ENCODE measurements at regions of chr1 and their contacts with region 1.

Region 1: DNA sequence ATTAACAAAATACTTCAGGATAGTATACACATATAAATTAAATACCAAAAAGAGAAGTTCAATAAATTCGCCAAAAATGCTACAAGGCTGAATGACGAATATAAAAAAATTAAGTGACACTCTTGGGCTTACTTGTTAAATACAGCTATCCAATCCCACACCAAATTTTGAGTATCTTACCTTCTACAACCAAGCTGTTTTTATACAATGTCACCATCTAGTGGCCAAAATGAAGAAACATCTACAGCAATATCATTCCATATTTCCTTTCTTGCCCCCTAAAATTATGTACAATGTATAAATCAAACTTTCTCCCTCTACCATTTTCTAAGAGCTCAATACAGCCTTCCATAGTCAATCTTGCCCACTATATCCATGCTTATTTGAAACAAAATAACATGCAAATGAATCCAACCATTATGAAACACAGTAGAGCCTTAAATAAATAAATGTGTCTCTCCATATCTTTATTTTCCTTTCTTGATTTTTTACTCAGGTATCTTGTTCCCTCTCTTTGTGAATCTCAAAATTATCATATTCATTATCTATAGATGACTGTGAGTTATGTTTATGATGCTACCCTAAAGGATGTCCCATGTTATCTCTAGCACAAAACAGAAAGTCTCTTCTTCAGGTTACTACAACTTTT is 86.3 kb downstream of the ACBD6 start:
- DNase-seq: peak; percentile 55
- ATAC-seq: no peak
- H3K4me3 ChIP-seq: no peak overlapping the region
- H3K27ac ChIP-seq: no peak overlapping the region
- H3K4me1 ChIP-seq: no peaks in the 10 kb centered on the region
- H3K27me3 ChIP-seq: no peaks in the 10 kb centered on the region
- CTCF ChIP-seq: peak; percentile 65
- POLR2A ChIP-seq: no peak
- RAD21 ChIP-seq: peak; percentile 77

Region 2: GRCh38 chr1:180252638-180253536 is 163.2 kb before region 1 on chr1:
- CTCF ChIA-PET with region 1: interaction called, 7 read pairs
- POLR2A ChIA-PET with region 1: no interaction called
- dilution Hi-C with region 1: no loop called
- in situ Hi-C with region 1: loop called (anchors 5 kb)
- intact Hi-C with region 1: loop called (anchors 2 kb)
- DNase-seq: peak; percentile 65
- ATAC-seq: peak; percentile 74
- H3K4me3 ChIP-seq: no peak overlapping the region
- H3K27ac ChIP-seq: no peak overlapping the region
- H3K4me1 ChIP-seq: peaks cover 4% of the 10 kb centered on the region; the same call in 1 of the 2 replicates
- H3K27me3 ChIP-seq: peaks cover 13% of the 10 kb centered on the region
- CTCF ChIP-seq: peak; percentile 93
- POLR2A ChIP-seq: no peak
- RAD21 ChIP-seq: peak; percentile 94